ENCODE measurements at regions of chr17 and their contacts with region 1.

Region 1: DNA sequence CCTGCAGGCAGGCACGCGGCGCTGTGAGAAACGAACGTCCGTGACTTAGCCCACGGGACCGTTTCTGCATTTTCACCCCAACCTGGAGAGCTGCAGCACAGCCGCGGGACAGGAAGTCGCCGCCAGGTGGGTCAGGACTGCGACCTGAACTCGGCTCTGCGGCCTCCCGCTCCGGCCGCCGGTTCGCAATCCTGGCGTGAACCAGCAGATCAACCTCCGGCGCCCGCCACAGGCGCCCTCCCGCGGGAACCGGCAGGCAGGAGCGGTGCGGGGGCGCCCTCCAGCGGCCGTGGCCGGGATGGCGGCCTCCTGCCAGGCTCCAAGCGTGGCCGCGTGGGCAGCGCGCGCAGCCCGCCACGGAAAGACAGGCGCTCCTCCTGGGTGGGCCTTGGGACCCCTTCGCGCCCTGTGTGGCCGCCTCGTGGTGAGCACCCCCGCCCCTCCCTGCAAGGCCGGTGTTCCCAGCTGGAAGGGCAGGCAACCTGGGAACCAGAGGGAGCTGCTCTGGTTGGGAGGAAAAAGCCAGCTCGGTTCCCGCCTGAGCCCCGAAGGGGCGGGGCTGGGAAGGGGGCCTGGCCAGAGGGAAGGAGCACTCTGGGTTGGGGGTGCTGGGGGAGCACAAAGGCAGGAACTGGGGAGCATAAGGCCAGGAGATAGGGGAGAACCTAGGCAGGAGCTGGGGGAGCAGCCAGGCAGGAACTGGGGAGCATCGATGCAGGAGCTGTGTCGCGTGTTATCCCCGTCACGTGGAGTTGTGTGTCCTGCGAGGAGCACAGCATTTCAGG is 28.2 kb downstream of the ACTG1 start:
- DNase-seq: peak; percentile 89 to 97 (median 94)
- ATAC-seq: peak; percentile 78 to 83 (median 80)
- H3K4me3 ChIP-seq: peak overlapping the region in 3 of 4 donors; percentile 23 to 45 (median 43)
- H3K27ac ChIP-seq: peak overlapping the region in 2 of 4 donors; percentile 44 to 62
- H3K4me1 ChIP-seq: peaks cover 5 to 21% (median 11%) of the 10 kb centered on the region in 3 donors
- H3K27me3 ChIP-seq: no peaks in the 10 kb centered on the region
- CTCF ChIP-seq: peak; percentile 98 to 99 (median 99)

Region 2: GRCh38 chr17:81253358-81254131 is 230.8 kb before region 1 on chr17:
- intact Hi-C with region 1: loop called in 2 of 3 experiments (anchors 5 to 10 kb)
- DNase-seq: peak in 2 of 6 donors; percentile 38 to 49
- ATAC-seq: peak; percentile 43 to 57 (median 44)
- H3K4me3 ChIP-seq: no peak overlapping the region
- H3K27ac ChIP-seq: no peak overlapping the region
- H3K4me1 ChIP-seq: no peaks in the 10 kb centered on the region
- H3K27me3 ChIP-seq: no peaks in the 10 kb centered on the region
- CTCF ChIP-seq: peak; percentile 27 to 57 (median 54)

Region 3: GRCh38 chr17:81294856-81295680 is 189.3 kb before region 1 on chr17 and contains the start of gene SLC38A10:
- intact Hi-C with region 1: loop called in 1 of 3 experiments (anchors 5 kb)
- DNase-seq: peak; percentile 92 to 97 (median 94)
- ATAC-seq: peak; percentile 86 to 92 (median 88)
- H3K4me3 ChIP-seq: peak within 1 kb of the TSS; percentile 73 to 93 (median 88)
- H3K27ac ChIP-seq: peak within 1 kb of the TSS; percentile 86 to 98 (median 93)
- H3K4me1 ChIP-seq: peaks cover 0 to 15% (median 0%) of the 10 kb centered on the region in 3 donors
- H3K27me3 ChIP-seq: no peaks in the 10 kb centered on the region
- CTCF ChIP-seq: no peak
- total RNA-seq, gene SLC38A10: 72.8 to 119 (median 95.7) TPM

Region 4: GRCh38 chr17:81401723-81402529 is 82.5 kb before region 1 on chr17:
- intact Hi-C with region 1: loop called in 2 of 3 experiments (anchors 10 kb)
- DNase-seq: peak in 1 of 6 donors; percentile 72
- ATAC-seq: no peak
- H3K4me3 ChIP-seq: no peak overlapping the region
- H3K27ac ChIP-seq: peak overlapping the region in 1 of 4 donors; percentile 15
- H3K4me1 ChIP-seq: peaks cover 0 to 8% (median 0%) of the 10 kb centered on the region in 3 donors
- H3K27me3 ChIP-seq: no peaks in the 10 kb centered on the region
- CTCF ChIP-seq: no peak